ENCODE measurements at regions of chr6 and their contacts with region 1.

Region 1: DNA sequence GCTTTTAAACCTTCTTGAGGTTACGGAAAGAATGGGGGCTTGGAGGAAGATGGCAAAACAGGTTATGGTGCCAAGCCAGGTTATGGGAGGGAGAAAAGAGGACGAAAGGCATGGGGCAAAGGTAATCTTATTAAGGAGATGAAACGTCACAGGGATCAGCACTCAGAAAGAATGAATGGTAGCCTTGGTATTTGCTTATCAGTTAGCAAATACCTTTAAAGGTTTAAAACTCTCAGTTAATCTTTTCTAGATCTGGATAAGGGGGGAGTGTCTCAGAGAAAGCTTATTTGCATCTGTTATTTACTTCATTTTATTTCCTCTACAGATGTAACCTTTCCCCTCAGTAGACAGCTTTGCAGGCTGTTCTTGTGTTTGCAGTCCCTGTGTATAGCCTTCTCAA is 55.5 kb upstream of the EEF1E1 start:
- DNase-seq: peak; percentile 80 to 83
- H3K4me3 ChIP-seq: peak overlapping the region; percentile 30
- H3K4me3 Mint-ChIP-seq: peak overlapping the region; percentile 86
- H3K27ac Mint-ChIP-seq: peak overlapping the region; percentile 82
- H3K4me1 ChIP-seq: peaks cover 53% of the 10 kb centered on the region
- H3K4me1 Mint-ChIP-seq: peaks cover 59% of the 10 kb centered on the region
- H3K27me3 ChIP-seq: no peaks in the 10 kb centered on the region
- H3K27me3 Mint-ChIP-seq: no peaks in the 10 kb centered on the region
- CTCF ChIP-seq: no peak

Region 2: GRCh38 chr6:7992002-7992815 is 165.6 kb before region 1 on chr6:
- CTCF ChIA-PET with region 1: no interaction called
- POLR2A ChIA-PET with region 1: no interaction called
- intact Hi-C with region 1: no loop called
- DNase-seq: peak in 1 of 2 experiments; percentile 36
- H3K4me3 ChIP-seq: no peak overlapping the region
- H3K4me3 Mint-ChIP-seq: no peak overlapping the region
- H3K27ac Mint-ChIP-seq: no peak overlapping the region
- H3K4me1 ChIP-seq: peaks cover 3% of the 10 kb centered on the region
- H3K4me1 Mint-ChIP-seq: peaks cover 7% of the 10 kb centered on the region
- H3K27me3 ChIP-seq: no peaks in the 10 kb centered on the region
- H3K27me3 Mint-ChIP-seq: no peaks in the 10 kb centered on the region
- CTCF ChIP-seq: peak in 1 of 2 experiments; percentile 47

Region 3: GRCh38 chr6:8180327-8181159 is 22.7 kb after region 1 on chr6:
- CTCF ChIA-PET with region 1: no interaction called
- POLR2A ChIA-PET with region 1: interaction called, 3 read pairs
- intact Hi-C with region 1: loop called (anchors 2 kb)
- DNase-seq: peak; percentile 44 to 50
- H3K4me3 ChIP-seq: no peak overlapping the region
- H3K4me3 Mint-ChIP-seq: no peak overlapping the region
- H3K27ac Mint-ChIP-seq: peak overlapping the region; percentile 51
- H3K4me1 ChIP-seq: peaks cover 42% of the 10 kb centered on the region
- H3K4me1 Mint-ChIP-seq: peaks cover 47% of the 10 kb centered on the region
- H3K27me3 ChIP-seq: no peaks in the 10 kb centered on the region
- H3K27me3 Mint-ChIP-seq: no peaks in the 10 kb centered on the region
- CTCF ChIP-seq: no peak

Region 4: DNA sequence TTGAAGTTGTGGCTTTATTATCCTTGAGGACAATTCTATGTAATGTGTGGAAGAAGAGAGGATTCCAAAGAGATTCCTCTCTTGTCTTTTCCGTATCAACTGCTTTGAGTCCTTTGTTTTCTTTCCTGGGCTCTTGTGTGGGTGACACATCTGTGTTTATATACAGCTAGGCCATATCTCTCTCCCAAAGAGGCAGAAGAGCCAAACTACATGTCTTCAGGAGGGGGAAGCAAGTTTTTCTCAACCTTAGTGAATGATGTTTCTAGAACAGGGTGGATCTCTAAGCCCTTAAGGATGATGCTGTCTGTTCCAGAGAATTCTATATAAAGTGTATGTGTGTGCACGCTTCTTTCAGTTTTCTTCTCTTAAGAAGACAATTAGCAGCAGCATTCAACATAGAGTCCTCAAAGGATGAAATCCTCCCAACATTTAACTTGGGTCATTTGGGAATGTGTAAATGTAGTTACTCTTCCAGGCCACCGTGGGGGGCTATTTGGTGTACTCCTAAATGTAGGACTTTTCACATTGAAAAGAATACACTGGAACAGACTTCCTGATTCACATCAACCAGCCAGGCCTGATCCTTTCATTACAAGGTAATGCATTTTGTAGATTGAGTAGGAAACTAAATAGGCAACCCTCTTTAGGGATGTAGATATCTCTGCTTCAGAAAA is 37.3 kb after region 1 on chr6:
- CTCF ChIA-PET with region 1: no interaction called
- POLR2A ChIA-PET with region 1: interaction called, 6 read pairs
- intact Hi-C with region 1: loop called (anchors 1 kb)
- DNase-seq: peak; percentile 52 to 63
- H3K4me3 ChIP-seq: no peak overlapping the region
- H3K4me3 Mint-ChIP-seq: peak overlapping the region; percentile 47
- H3K27ac Mint-ChIP-seq: peak overlapping the region; percentile 45
- H3K4me1 ChIP-seq: peaks cover 55% of the 10 kb centered on the region
- H3K4me1 Mint-ChIP-seq: peaks cover 42% of the 10 kb centered on the region
- H3K27me3 ChIP-seq: no peaks in the 10 kb centered on the region
- H3K27me3 Mint-ChIP-seq: no peaks in the 10 kb centered on the region
- CTCF ChIP-seq: peak; percentile 41 to 57

Region 5: DNA sequence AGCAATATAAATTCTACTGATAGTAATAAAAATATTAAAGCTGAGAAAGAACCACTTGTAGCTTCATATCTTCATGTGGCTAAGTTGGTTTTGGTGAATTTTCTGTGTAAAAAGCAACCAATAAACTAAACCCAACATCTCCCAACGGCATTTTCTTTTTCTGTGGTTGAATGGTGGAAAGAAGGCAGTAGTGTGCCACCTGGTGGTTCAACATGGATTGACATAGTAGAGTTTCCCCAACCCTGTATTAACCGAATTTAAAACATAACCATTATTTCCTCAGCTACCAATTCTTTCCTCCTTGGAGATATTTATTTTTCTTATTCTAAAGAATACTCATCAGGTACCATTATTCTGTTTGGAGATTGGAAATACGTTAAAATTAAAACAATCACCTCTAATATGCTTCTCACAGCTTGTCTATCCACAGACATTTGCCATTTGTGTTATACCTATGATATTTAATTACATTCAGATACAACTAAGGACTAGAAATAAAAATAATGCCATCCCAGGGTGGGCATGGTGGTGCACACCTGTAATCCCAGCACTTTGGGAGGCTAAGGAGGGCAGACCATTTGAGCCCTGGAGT is 61.6 kb after region 1 on chr6:
- CTCF ChIA-PET with region 1: no interaction called
- POLR2A ChIA-PET with region 1: no interaction called
- intact Hi-C with region 1: loop called (anchors 1 kb)
- DNase-seq: peak in 1 of 2 experiments; percentile 52
- H3K4me3 ChIP-seq: no peak overlapping the region
- H3K4me3 Mint-ChIP-seq: no peak overlapping the region
- H3K27ac Mint-ChIP-seq: no peak overlapping the region
- H3K4me1 ChIP-seq: peaks cover 18% of the 10 kb centered on the region
- H3K4me1 Mint-ChIP-seq: peaks cover 14% of the 10 kb centered on the region
- H3K27me3 ChIP-seq: no peaks in the 10 kb centered on the region
- H3K27me3 Mint-ChIP-seq: no peaks in the 10 kb centered on the region
- CTCF ChIP-seq: peak; percentile 50 to 71

Region 6: GRCh38 chr6:8229915-8230756 is 72.3 kb after region 1 on chr6:
- CTCF ChIA-PET with region 1: no interaction called
- POLR2A ChIA-PET with region 1: interaction called, 4 read pairs
- intact Hi-C with region 1: loop called (anchors 5 kb)
- DNase-seq: peak; percentile 79 to 89
- H3K4me3 ChIP-seq: no peak overlapping the region
- H3K4me3 Mint-ChIP-seq: peak overlapping the region; percentile 61
- H3K27ac Mint-ChIP-seq: peak overlapping the region; percentile 83
- H3K4me1 ChIP-seq: peaks cover 54% of the 10 kb centered on the region
- H3K4me1 Mint-ChIP-seq: peaks cover 31% of the 10 kb centered on the region
- H3K27me3 ChIP-seq: no peaks in the 10 kb centered on the region
- H3K27me3 Mint-ChIP-seq: no peaks in the 10 kb centered on the region
- CTCF ChIP-seq: no peak

Region 7: DNA sequence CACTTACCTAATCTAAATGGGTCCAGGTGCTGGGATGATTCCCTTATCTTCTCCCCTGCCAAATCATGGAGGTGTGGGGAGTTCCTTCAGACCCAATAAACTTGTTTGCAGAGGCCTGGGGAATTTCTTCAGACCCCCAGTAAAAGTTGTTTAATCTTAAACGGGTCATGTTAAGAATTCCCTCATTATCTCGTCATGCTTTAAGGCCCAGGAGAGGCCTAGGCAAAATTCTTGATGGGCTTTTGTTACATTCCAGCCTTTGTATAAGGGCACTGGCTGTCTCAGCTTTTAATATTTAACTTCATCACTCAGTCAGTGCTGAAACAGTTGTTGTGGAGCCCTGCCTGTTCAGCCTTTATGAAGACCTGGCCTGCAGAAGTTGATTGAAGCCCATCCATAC is 288.6 kb after region 1 on chr6:
- CTCF ChIA-PET with region 1: no interaction called
- POLR2A ChIA-PET with region 1: no interaction called
- intact Hi-C with region 1: loop called (anchors 2 kb)
- DNase-seq: peak; percentile 82 to 88
- H3K4me3 ChIP-seq: no peak overlapping the region
- H3K4me3 Mint-ChIP-seq: peak overlapping the region; percentile 83
- H3K27ac Mint-ChIP-seq: peak overlapping the region; percentile 93
- H3K4me1 ChIP-seq: peaks cover 56% of the 10 kb centered on the region
- H3K4me1 Mint-ChIP-seq: peaks cover 44% of the 10 kb centered on the region
- H3K27me3 ChIP-seq: no peaks in the 10 kb centered on the region
- H3K27me3 Mint-ChIP-seq: no peaks in the 10 kb centered on the region
- CTCF ChIP-seq: no peak